Endothelial cell of umbilical vein (primary cell): ENCODE measurements at regions of chr1 and their contacts with region 1.

Region 1: GRCh38 chr1:107750358-107750959 is 214.5 kb downstream of the VAV3 start:
- DNase-seq: peak; percentile 42
- H3K4me3 ChIP-seq: no peak overlapping the region
- H3K27ac ChIP-seq: no peak overlapping the region
- H3K4me1 ChIP-seq: no peaks in the 10 kb centered on the region
- H3K27me3 ChIP-seq: no peaks in the 10 kb centered on the region
- CTCF ChIP-seq: peak; percentile 57 to 65
- POLR2A ChIP-seq: no peak

Region 2: DNA sequence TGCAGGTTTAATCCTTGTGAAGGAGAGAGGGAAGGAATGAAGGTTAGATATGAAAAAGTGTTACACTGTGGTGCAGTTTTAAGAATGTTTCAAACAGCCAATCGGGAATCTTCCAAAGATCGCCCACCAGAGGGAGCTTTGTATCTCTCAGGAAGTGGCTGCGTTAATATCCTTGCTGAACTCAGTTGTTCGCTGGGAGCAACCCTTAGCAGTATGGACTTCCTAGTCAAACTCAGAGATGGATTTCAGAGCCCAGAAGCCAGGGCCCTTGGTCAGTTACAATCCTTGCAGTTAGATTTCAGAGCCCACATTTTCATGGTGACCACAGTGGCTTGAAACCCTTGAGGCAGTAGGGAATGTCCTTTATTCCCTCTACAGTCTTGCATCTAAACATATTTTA is 473.4 kb before region 1 on chr1:
- CTCF ChIA-PET with region 1: interaction called, 4 read pairs
- POLR2A ChIA-PET with region 1: no interaction called
- dilution Hi-C with region 1: no loop called
- intact Hi-C with region 1: loop called (anchors 1 kb)
- DNase-seq: peak; percentile 21
- H3K4me3 ChIP-seq: no peak overlapping the region
- H3K27ac ChIP-seq: no peak overlapping the region
- H3K4me1 ChIP-seq: no peaks in the 10 kb centered on the region
- H3K27me3 ChIP-seq: no peaks in the 10 kb centered on the region
- CTCF ChIP-seq: peak in 1 of 2 donors; percentile 28
- POLR2A ChIP-seq: no peak

Region 3: GRCh38 chr1:107430540-107431228 is 319.8 kb before region 1 on chr1:
- CTCF ChIA-PET with region 1: interaction called, 3 read pairs
- POLR2A ChIA-PET with region 1: no interaction called
- dilution Hi-C with region 1: no loop called
- intact Hi-C with region 1: loop called (anchors 1 kb)
- DNase-seq: peak; percentile 18
- H3K4me3 ChIP-seq: no peak overlapping the region
- H3K27ac ChIP-seq: no peak overlapping the region
- H3K4me1 ChIP-seq: no peaks in the 10 kb centered on the region
- H3K27me3 ChIP-seq: no peaks in the 10 kb centered on the region
- CTCF ChIP-seq: peak; percentile 28 to 53
- POLR2A ChIP-seq: no peak

Region 4: GRCh38 chr1:107952989-107953388 is 202.5 kb after region 1 on chr1:
- CTCF ChIA-PET with region 1: no interaction called
- POLR2A ChIA-PET with region 1: no interaction called
- dilution Hi-C with region 1: no loop called
- intact Hi-C with region 1: no loop called
- DNase-seq: peak; percentile 46
- H3K4me3 ChIP-seq: no peak overlapping the region
- H3K27ac ChIP-seq: no peak overlapping the region
- H3K4me1 ChIP-seq: peaks cover 13% of the 10 kb centered on the region
- H3K27me3 ChIP-seq: peaks cover 5 to 11% of the 10 kb centered on the region in 2 experiments
- CTCF ChIP-seq: no peak
- POLR2A ChIP-seq: no peak